PC-9 (cell line): ENCODE measurements at regions of chr19 and their contacts with region 1.

Region 1: GRCh38 chr19:47729992-47730889 is 15.1 kb upstream of the NOP53 start:
- DNase-seq: peak; percentile 82 to 91
- H3K4me3 ChIP-seq: peak overlapping the region; percentile 70
- H3K27ac ChIP-seq: peak overlapping the region; percentile 97
- H3K4me1 ChIP-seq: peaks cover 35% of the 10 kb centered on the region
- H3K27me3 ChIP-seq: no peaks in the 10 kb centered on the region
- CTCF ChIP-seq: no peak

Region 2: GRCh38 chr19:47157431-47158321 is 572.6 kb before region 1 on chr19:
- CTCF ChIA-PET with region 1: no interaction called
- POLR2A ChIA-PET with region 1: interaction called, 25 read pairs
- intact Hi-C with region 1: no loop called
- DNase-seq: peak; percentile 59 to 78
- H3K4me3 ChIP-seq: no peak overlapping the region
- H3K27ac ChIP-seq: peak overlapping the region; percentile 78
- H3K4me1 ChIP-seq: peaks cover 55% of the 10 kb centered on the region
- H3K27me3 ChIP-seq: no peaks in the 10 kb centered on the region
- CTCF ChIP-seq: 0 out of 2 replicates have a peak, but pooled peaks have one; percentile 15

Region 3: DNA sequence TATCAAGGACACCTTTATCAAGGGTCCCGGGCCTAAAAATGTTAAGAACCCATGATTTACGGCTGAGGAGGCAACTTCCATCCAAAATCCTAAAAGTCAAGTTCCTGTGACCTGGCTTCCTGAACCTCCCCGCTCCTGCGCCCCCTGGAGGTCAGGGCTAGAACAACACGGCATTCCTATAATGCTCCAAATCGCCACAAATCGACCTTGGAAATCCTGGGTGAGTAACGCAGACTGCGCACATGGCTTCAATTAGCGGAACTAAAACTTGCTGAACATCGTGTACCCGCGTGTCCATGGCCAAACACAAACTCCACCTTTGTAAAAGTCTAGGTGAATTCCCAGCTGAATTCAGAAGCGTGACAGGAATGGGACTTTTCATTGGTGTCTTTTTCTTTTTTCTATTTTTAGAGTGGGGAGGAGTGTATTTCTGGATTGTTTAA is 424.9 kb before region 1 on chr19:
- CTCF ChIA-PET with region 1: no interaction called
- POLR2A ChIA-PET with region 1: interaction called, 11 read pairs
- intact Hi-C with region 1: no loop called
- DNase-seq: peak; percentile 64 to 65
- H3K4me3 ChIP-seq: peak overlapping the region; percentile 7; the same call in 1 of the 2 replicates
- H3K27ac ChIP-seq: no peak overlapping the region
- H3K4me1 ChIP-seq: peaks cover 15% of the 10 kb centered on the region
- H3K27me3 ChIP-seq: no peaks in the 10 kb centered on the region
- CTCF ChIP-seq: peak; percentile 99

Region 4: GRCh38 chr19:47633519-47633918 is 96.7 kb before region 1 on chr19:
- CTCF ChIA-PET with region 1: no interaction called
- POLR2A ChIA-PET with region 1: no interaction called
- intact Hi-C with region 1: no loop called
- DNase-seq: peak; percentile 13 to 47
- H3K4me3 ChIP-seq: no peak overlapping the region
- H3K27ac ChIP-seq: no peak overlapping the region
- H3K4me1 ChIP-seq: peaks cover 11% of the 10 kb centered on the region
- H3K27me3 ChIP-seq: no peaks in the 10 kb centered on the region
- CTCF ChIP-seq: no peak

Region 5: GRCh38 chr19:47682939-47683338 is 47.3 kb before region 1 on chr19:
- CTCF ChIA-PET with region 1: no interaction called
- POLR2A ChIA-PET with region 1: no interaction called
- intact Hi-C with region 1: no loop called
- DNase-seq: no peak
- H3K4me3 ChIP-seq: no peak overlapping the region
- H3K27ac ChIP-seq: no peak overlapping the region
- H3K4me1 ChIP-seq: no peaks in the 10 kb centered on the region
- H3K27me3 ChIP-seq: no peaks in the 10 kb centered on the region
- CTCF ChIP-seq: no peak

Region 6: DNA sequence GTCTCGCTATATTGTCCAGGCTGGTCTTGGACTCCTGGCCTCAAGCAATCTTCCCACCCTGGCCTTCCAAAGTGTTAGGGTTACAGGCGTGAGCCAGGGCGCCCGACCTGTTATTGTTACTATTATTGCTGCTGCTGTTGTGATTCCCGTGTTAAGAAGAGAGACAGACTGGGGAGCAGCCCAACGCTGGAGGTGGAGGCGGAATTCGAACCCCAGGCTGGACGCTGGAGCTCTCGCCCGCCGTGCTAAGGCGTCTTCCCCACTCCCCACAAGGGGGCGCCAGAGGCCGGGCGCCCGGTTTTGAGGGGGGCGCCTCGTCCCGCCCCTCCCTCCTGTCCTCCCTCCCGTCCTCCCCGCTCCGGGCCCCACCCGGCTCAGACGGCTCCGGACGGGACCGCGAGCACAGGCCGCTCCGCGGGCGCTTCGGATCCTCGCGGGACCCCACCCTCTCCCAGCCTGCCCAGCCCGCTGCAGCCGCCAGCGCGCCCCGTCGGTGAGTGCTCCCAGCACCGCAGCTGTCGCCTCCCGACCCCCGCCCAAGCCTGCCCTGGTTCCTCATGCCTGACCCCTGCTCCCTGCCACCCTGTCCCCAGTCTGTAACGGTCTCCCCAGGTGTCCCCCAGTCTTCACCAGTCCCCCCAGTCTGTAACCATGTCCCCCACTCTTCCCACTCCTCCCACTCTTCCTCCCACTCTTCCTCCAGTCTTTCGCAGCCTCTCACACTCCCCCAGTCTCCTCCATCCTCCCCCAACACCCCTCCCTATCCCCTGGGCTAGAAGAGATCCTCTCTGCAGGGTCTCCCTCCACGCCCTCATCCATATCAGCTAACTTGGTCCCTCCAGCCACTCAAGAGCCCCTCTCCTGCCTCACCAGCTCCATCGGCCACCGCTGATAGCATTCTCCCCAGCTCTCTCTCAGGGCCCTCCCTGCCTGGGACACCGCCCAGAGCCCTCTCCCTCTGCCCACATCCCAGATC is 16.9 kb before region 1 on chr19 and contains the start of gene EHD2:
- CTCF ChIA-PET with region 1: no interaction called
- POLR2A ChIA-PET with region 1: no interaction called
- intact Hi-C with region 1: loop called (anchors 1 kb)
- DNase-seq: peak in 1 of 2 experiments; percentile 73
- H3K4me3 ChIP-seq: no peak within 1 kb of the TSS
- H3K27ac ChIP-seq: no peak within 1 kb of the TSS
- H3K4me1 ChIP-seq: 0 out of 2 replicates have a peak, but pooled peaks cover 5% of the 10 kb centered on the region
- H3K27me3 ChIP-seq: no peaks in the 10 kb centered on the region
- CTCF ChIP-seq: peak; percentile 94
- total RNA-seq, gene EHD2: 25.6 and 36.6 TPM in 2 replicates

Region 7: GRCh38 chr19:47742634-47743033 is 12.4 kb after region 1 on chr19:
- CTCF ChIA-PET with region 1: no interaction called
- POLR2A ChIA-PET with region 1: no interaction called
- intact Hi-C with region 1: loop called (anchors 1 kb)
- DNase-seq: no peak
- H3K4me3 ChIP-seq: no peak overlapping the region
- H3K27ac ChIP-seq: peak overlapping the region; percentile 73
- H3K4me1 ChIP-seq: peaks cover 29% of the 10 kb centered on the region
- H3K27me3 ChIP-seq: no peaks in the 10 kb centered on the region
- CTCF ChIP-seq: no peak